K562 (cell line): ENCODE measurements at regions of chr2 and their contacts with region 1.

Region 1: DNA sequence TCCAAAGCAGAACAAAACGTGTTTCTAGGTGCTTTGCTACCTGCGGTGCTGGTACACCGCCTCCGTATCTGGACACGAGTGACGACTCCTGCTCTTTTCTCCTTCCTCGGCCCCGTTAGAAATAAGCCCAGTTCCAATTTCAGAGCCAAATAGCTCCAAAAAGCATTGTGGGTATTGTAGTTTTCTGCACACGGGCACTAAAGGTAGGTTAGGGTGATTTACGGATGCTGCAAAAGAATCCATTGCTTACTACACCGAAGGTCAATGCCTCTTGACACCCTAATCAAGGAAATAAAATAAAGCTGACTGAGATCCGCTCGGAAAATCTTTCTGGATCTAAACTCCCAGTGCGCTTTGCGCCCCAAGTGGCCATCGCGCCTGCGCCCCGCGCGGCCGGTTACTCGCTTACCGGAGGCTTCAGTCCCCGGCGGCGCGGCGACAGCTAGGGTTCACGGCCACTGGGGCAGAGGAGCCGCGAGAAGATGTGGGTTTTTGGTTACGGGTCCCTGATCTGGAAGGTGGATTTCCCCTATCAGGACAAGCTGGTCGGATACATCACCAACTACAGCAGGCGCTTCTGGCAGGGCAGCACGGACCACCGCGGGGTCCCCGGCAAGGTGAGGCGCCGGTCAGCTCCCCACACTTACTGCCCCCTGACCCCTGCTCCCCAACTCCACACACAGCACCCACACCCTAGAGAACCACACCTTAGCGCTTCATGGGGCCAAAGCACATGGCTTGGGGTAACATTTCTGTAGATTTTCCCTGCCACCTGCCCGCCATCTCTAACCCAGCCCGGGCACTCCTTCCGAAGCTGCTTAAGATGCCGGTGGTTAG is at the start of gene CHAC2:
- DNase-seq: peak; percentile 75 to 92 (median 80)
- ATAC-seq: peak; percentile 88
- H3K4me3 ChIP-seq: peak within 1 kb of the TSS; percentile 62
- H3K27ac ChIP-seq: peak within 1 kb of the TSS; percentile 90
- H3K4me1 ChIP-seq: peaks cover 0 to 34% of the 10 kb centered on the region in 2 experiments; a peak in 3 of 5 replicates
- H3K27me3 ChIP-seq: no peaks in the 10 kb centered on the region
- CTCF ChIP-seq: peak in 2 of 3 experiments; percentile 14 to 22; a peak in 3 of 6 replicates
- EP300 ChIP-seq: no peak
- POLR2A ChIP-seq: peak; percentile 89
- RAD21 ChIP-seq: no peak
- polyA plus RNA-seq, gene CHAC2: 32.6 to 35.6 TPM

Region 2: GRCh38 chr2:51981783-51982182 is 1785.8 kb before region 1 on chr2:
- CTCF ChIA-PET with region 1: no interaction called
- POLR2A ChIA-PET with region 1: no interaction called
- in situ Hi-C with region 1: no loop called
- intact Hi-C with region 1: no loop called
- DNase-seq: no peak
- ATAC-seq: no peak
- H3K4me3 ChIP-seq: no peak overlapping the region
- H3K27ac ChIP-seq: no peak overlapping the region
- H3K4me1 ChIP-seq: no peaks in the 10 kb centered on the region
- H3K27me3 ChIP-seq: no peaks in the 10 kb centered on the region
- CTCF ChIP-seq: no peak
- EP300 ChIP-seq: no peak
- POLR2A ChIP-seq: no peak
- RAD21 ChIP-seq: no peak

Region 3: GRCh38 chr2:53668624-53669026 is 99.0 kb before region 1 on chr2:
- CTCF ChIA-PET with region 1: no interaction called
- POLR2A ChIA-PET with region 1: interaction called, 3 read pairs
- in situ Hi-C with region 1: no loop called
- intact Hi-C with region 1: loop called (anchors 5 kb)
- DNase-seq: peak; percentile 74 to 95 (median 84)
- ATAC-seq: peak; percentile 97
- H3K4me3 ChIP-seq: no peak overlapping the region
- H3K27ac ChIP-seq: peak overlapping the region; percentile 76
- H3K4me1 ChIP-seq: peaks cover 8 to 11% of the 10 kb centered on the region in 2 experiments; a peak in 3 of 5 replicates
- H3K27me3 ChIP-seq: no peaks in the 10 kb centered on the region
- CTCF ChIP-seq: no peak; a peak in 1 of 6 replicates
- EP300 ChIP-seq: peak; percentile 95
- POLR2A ChIP-seq: no peak
- RAD21 ChIP-seq: no peak

Region 4: DNA sequence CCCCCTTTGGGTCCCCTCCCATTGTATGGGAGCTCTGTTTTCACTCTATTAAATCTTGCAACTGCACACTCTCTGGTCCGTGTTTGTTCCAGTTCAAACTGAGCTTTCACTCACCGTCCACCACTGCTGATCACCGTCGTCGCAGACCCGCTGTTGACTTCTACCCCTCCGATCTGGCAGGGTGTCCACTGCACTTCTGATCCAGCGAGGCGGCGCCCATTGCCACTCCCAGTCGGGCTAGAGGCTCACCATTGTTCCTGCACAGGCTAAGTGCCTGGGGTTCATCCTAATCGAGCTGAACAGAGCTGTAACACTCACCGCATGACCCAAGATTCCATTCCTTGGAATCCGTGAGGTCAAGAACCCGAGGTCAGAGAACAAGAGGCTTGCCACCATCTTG is 11.0 kb before region 1 on chr2:
- CTCF ChIA-PET with region 1: no interaction called
- POLR2A ChIA-PET with region 1: interaction called, 10 read pairs
- in situ Hi-C with region 1: no loop called
- intact Hi-C with region 1: no loop called
- DNase-seq: no peak
- ATAC-seq: no peak
- H3K4me3 ChIP-seq: no peak overlapping the region
- H3K27ac ChIP-seq: no peak overlapping the region
- H3K4me1 ChIP-seq: no peaks in the 10 kb centered on the region
- H3K27me3 ChIP-seq: no peaks in the 10 kb centered on the region
- CTCF ChIP-seq: no peak
- EP300 ChIP-seq: no peak
- POLR2A ChIP-seq: no peak
- RAD21 ChIP-seq: no peak

Region 5: DNA sequence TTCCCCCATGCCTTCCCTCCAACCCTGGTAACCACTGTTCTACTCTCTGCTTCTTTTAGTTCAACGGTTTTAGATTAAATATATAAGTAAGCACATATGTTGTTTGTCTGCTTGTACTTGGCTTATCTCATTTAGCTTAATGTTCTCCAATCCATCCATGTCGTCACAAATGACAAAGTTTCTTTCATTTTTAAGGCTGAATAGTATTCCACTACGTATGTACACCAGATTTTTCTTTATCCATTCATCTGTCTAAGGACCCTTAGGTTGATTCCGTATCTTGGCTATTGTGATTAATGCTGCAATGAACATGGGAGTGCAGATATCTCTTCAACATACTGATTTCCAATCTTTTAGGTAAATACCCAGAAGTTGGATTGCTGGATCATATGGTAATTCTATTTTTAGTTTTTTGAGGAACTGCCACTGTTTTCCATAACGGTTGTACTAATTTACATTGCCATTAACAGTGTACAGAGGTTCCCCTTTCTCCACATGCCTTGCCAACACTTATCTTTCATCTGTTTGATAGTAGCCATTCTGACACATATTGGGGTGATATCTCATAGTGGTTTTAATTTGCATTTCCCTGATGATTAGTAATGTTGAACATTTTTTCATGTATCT is 11.0 kb after region 1 on chr2:
- CTCF ChIA-PET with region 1: no interaction called
- POLR2A ChIA-PET with region 1: interaction called, 45 read pairs
- in situ Hi-C with region 1: no loop called
- intact Hi-C with region 1: no loop called
- DNase-seq: no peak
- ATAC-seq: no peak
- H3K4me3 ChIP-seq: no peak overlapping the region
- H3K27ac ChIP-seq: no peak overlapping the region
- H3K4me1 ChIP-seq: no peaks in the 10 kb centered on the region
- H3K27me3 ChIP-seq: no peaks in the 10 kb centered on the region
- CTCF ChIP-seq: no peak
- EP300 ChIP-seq: no peak
- POLR2A ChIP-seq: no peak
- RAD21 ChIP-seq: no peak

Region 6: GRCh38 chr2:53786705-53787612 is 19.3 kb after region 1 on chr2 and contains the starts of genes ASB3 and ERLEC1:
- CTCF ChIA-PET with region 1: no interaction called
- POLR2A ChIA-PET with region 1: interaction called, 45 read pairs
- in situ Hi-C with region 1: no loop called
- intact Hi-C with region 1: loop called (anchors 2 kb)
- DNase-seq: peak; percentile 76 to 93 (median 83)
- ATAC-seq: peak; percentile 92
- H3K4me3 ChIP-seq: peak within 1 kb of the TSS; percentile 94
- H3K27ac ChIP-seq: peak within 1 kb of the TSS; percentile 87
- H3K4me1 ChIP-seq: peaks cover 4 to 11% of the 10 kb centered on the region in 2 experiments; a peak in 4 of 5 replicates
- H3K27me3 ChIP-seq: no peaks in the 10 kb centered on the region; a peak in 1 of 5 replicates
- CTCF ChIP-seq: peak in 1 of 3 experiments; percentile 5; a peak in 1 of 6 replicates
- EP300 ChIP-seq: no peak; the same call in 1 of the 2 replicates
- POLR2A ChIP-seq: peak; percentile 90
- RAD21 ChIP-seq: peak in 1 of 2 experiments; percentile 4; a peak in 1 of 4 replicates
- polyA plus RNA-seq, gene ASB3: 20.1 to 22.4 TPM
- polyA plus RNA-seq, gene ERLEC1: 12.0 to 13.8 TPM